ENCODE measurements at regions of chr1 and their contacts with region 1.

Region 1: DNA sequence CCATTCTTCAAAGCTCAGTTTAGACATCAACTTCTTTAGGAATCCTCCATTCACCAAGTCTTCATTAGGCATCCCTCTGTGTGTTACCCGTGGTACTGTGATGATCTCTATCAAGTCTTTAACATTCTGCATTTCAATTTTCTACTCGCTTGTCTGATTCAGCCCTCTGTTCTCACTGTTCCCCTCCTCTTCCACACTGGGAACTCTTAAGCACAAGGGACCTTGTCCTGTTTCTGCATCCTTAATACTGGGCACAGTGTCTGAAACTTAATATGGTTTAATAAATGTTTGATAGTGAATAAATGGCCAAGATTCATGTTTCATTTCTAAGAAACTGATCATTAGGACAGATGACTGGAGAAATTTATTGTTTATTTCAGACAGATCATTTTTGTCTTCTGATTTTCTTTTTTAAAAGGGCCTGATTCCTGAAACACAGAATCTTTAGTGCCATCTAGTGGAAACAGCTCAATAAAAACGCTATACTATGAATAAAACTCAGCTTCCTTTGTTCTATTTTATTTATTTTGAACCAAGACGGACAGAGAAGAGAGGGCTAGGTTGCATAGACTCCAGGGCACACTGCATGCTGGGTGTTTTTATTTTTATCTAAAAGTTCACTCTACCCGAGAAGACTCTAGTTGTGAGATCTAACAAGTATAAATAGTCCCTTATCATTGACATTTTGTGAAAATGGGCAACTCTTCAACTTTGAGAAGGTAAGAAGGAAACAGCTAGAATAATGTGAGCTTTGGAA is 7.0 kb upstream of the TRIM45 start:
- DNase-seq: no peak

Region 2: DNA sequence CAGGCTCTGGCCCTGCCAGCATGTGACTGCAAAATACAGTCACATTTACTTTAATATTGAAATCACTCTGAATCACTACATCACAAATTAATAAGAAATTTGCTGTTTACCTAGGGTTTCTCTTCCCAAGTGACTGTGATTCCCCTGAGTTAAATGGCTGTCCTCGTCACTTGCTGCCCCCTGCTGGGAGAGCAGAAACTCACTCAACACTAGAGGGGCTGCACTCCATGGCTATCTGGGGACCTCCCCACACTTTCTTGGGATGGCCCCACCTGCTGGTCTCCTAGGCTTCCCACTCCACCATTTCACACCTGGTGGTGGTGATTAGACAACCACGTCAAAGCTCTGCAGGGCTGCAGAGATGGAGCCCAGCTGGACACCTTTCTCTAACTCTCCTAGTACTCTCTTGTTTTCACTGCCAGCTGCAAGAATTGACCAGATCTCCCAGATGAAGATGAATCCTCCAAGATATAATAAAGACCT is 310.9 kb before region 1 on chr1:
- intact Hi-C with region 1: no loop called
- DNase-seq: no peak

Region 3: DNA sequence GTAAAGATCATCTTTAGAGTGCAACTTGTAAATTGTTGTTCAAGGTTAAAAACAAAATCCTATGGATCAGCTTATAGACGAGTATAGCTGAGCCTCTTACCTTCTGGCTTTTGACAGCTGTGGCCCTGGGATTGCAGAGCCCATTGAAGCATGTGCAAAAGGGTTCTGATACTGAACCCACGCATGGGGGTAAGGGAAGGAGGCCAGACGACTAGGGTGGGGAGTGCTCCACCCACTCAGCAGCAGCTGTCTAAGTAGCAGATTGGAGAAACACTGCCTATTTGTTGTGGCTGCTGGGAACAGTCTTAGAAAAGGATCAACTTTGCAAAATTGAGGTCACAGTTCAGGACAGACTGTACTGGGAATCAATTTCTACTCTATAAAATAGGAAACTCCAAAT is 110.9 kb before region 1 on chr1:
- intact Hi-C with region 1: no loop called
- DNase-seq: no peak

Region 4: GRCh38 chr1:117077267-117077666 is 51.2 kb before region 1 on chr1:
- intact Hi-C with region 1: no loop called
- DNase-seq: no peak

Region 5: GRCh38 chr1:117231748-117232373 is 103.4 kb after region 1 on chr1:
- intact Hi-C with region 1: loop called (anchors 2 kb)
- DNase-seq: no peak

Region 6: GRCh38 chr1:117447661-117448060 is 319.2 kb after region 1 on chr1:
- intact Hi-C with region 1: no loop called
- DNase-seq: no peak